Calu3 (cell line): ENCODE measurements at regions of chr15 and their contacts with region 1.

Region 1: DNA sequence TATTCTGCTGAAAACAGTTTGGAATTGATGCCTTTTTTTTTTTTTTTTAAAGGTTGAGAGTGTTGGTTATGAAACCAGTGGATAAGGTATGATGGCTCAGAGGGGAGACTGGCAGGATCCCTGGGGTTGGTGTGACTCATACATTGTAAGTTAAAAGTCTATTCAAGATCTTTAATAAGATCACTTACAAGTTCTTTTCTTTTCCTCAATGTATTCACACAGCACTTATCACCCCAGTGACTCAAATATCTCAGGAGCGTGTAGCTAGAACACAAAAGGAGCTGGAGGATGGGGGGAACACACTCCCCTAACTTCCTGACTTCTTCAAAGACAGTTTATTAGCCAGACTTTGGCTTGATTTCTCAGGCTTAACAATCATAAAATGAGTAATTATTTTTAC is 285.3 kb downstream of the SV2B start:
- DNase-seq: peak; percentile 24
- H3K4me3 Mint-ChIP-seq: no peak overlapping the region
- H3K27ac Mint-ChIP-seq: no peak overlapping the region
- H3K4me1 Mint-ChIP-seq: peaks cover 16% of the 10 kb centered on the region
- H3K27me3 Mint-ChIP-seq: no peaks in the 10 kb centered on the region
- CTCF ChIP-seq: no peak

Region 2: DNA sequence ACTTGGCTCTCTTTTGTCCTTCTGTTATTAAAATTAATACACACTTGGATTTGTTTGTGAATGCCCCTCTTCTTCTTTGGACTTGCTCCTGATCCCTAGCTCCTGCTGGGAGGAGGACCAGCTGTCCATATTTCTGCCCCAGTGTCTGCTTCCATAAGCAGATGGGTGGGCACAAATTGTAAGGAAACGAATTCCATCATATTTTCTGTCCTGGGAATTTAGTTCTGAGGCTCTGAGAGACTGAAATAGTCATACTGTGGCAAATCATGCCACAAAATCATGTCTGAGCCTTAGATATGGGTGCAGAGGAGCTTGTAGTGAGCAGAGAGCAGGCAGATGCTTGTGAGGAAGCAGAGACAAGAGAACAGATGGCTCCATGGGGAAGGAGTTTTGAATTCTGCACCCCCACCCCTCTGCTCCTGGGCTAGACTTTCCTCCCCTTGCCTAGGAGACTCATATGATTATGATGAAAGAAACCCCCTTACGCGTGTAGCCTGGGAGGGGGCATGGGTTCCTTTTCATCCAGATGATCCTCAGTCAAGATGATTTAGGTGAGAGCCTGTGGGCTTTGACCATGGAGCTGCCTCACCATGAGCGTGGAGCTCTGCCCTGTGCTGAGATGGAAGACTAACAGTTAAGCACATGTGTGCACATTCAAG is 234.7 kb before region 1 on chr15:
- CTCF ChIA-PET with region 1: no interaction called
- intact Hi-C with region 1: no loop called
- DNase-seq: no peak
- H3K4me3 Mint-ChIP-seq: no peak overlapping the region
- H3K27ac Mint-ChIP-seq: no peak overlapping the region
- H3K4me1 Mint-ChIP-seq: no peaks in the 10 kb centered on the region
- H3K27me3 Mint-ChIP-seq: peaks cover 99% of the 10 kb centered on the region
- CTCF ChIP-seq: no peak

Region 3: GRCh38 chr15:91329914-91330313 is 55.4 kb before region 1 on chr15:
- CTCF ChIA-PET with region 1: no interaction called
- intact Hi-C with region 1: no loop called
- DNase-seq: no peak
- H3K4me3 Mint-ChIP-seq: no peak overlapping the region
- H3K27ac Mint-ChIP-seq: no peak overlapping the region
- H3K4me1 Mint-ChIP-seq: no peaks in the 10 kb centered on the region
- H3K27me3 Mint-ChIP-seq: no peaks in the 10 kb centered on the region
- CTCF ChIP-seq: no peak

Region 4: GRCh38 chr15:93362821-93363220 is 1977.5 kb after region 1 on chr15:
- CTCF ChIA-PET with region 1: interaction called, 13 read pairs
- intact Hi-C with region 1: no loop called
- DNase-seq: no peak
- H3K4me3 Mint-ChIP-seq: no peak overlapping the region
- H3K27ac Mint-ChIP-seq: no peak overlapping the region
- H3K4me1 Mint-ChIP-seq: no peaks in the 10 kb centered on the region
- H3K27me3 Mint-ChIP-seq: peaks cover 39% of the 10 kb centered on the region
- CTCF ChIP-seq: no peak